Sigmoid colon (tissue), 7 donors: ENCODE measurements at regions of chr12 and their contacts with region 1.

Region 1: GRCh38 chr12:990661-991349 is at the start of gene ERC1:
- DNase-seq: peak; percentile 94
- H3K4me3 ChIP-seq: peak within 1 kb of the TSS; percentile 77 to 97 (median 86)
- H3K27ac ChIP-seq: peak within 1 kb of the TSS; percentile 98 to 99 (median 98)
- H3K4me1 ChIP-seq: peaks cover 0 to 45% (median 34%) of the 10 kb centered on the region in 4 donors
- H3K27me3 ChIP-seq: no peaks in the 10 kb centered on the region
- CTCF ChIP-seq: no peak
- EP300 ChIP-seq: peak in 1 of 4 donors; percentile 8
- POLR2A ChIP-seq: peak; percentile 50 to 59
- total RNA-seq, gene ERC1: 34.6 to 97.8 (median 42.4) TPM

Region 2: GRCh38 chr12:955939-956338 is 34.9 kb before region 1 on chr12:
- intact Hi-C with region 1: no loop called
- DNase-seq: no peak
- H3K4me3 ChIP-seq: no peak overlapping the region
- H3K27ac ChIP-seq: no peak overlapping the region
- H3K4me1 ChIP-seq: peaks cover 0 to 7% (median 0%) of the 10 kb centered on the region in 4 donors
- H3K27me3 ChIP-seq: no peaks in the 10 kb centered on the region
- CTCF ChIP-seq: no peak
- EP300 ChIP-seq: no peak
- POLR2A ChIP-seq: no peak

Region 3: DNA sequence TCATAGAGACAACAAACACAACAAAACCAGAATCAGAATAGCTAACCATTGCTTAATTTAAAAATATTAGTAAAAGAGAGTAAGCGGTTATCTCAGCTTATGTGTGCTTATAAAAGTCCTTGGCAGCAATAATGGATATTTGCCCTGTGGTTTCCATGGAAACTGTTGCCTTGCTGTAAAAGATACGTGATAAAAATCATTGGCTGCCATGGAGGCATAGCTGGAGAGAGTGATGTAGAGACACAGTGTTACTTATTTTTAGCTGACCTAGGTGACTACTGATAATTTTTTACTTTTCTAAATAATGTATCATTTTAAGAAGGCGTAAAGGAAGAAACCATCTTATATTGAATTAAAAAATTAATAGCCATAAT is 93.1 kb after region 1 on chr12:
- intact Hi-C with region 1: loop called (anchors 5 kb)
- DNase-seq: no peak
- H3K4me3 ChIP-seq: peak overlapping the region in 3 of 4 donors; percentile 21 to 34 (median 26)
- H3K27ac ChIP-seq: peak overlapping the region; percentile 51 to 77 (median 72)
- H3K4me1 ChIP-seq: peaks cover 0 to 21% (median 9%) of the 10 kb centered on the region in 4 donors
- H3K27me3 ChIP-seq: no peaks in the 10 kb centered on the region
- CTCF ChIP-seq: no peak
- EP300 ChIP-seq: no peak
- POLR2A ChIP-seq: no peak

Region 4: DNA sequence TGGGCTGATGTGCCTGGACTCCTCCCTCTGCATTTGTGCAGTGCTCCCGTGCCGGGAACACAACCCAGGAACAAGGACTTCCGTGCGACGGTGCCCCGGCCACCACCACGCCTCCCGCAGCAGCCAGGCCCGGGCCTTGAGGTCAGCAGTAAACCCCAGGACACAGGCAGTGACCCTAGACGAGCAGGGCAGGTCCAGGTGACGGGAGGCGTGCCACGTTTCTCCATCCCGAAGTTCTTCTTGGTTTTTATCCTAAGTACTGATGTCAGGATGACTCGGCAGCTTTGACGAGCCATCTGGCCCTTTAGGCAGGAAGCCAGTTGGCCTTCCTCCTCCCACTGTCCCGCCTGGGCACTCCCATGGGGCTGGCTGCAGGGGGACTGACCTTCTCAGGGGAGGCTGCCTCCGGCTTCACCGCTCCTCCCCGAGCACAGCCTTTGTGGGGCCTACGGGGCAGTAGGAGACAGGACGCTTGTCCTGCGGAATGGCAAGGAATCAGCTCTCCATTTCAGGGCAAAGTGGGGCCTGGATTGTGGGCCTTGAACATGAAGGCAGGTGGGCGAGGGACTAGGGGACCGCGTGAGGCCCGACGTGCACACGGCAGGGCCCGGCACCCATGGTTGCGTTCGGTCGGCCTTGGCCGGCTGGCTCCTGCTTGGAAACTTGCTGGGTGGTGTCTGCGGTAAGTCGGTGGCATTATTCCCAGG is 509.4 kb after region 1 on chr12:
- intact Hi-C with region 1: no loop called
- DNase-seq: no peak
- H3K4me3 ChIP-seq: no peak overlapping the region
- H3K27ac ChIP-seq: no peak overlapping the region
- H3K4me1 ChIP-seq: peaks cover 0 to 36% (median 29%) of the 10 kb centered on the region in 4 donors
- H3K27me3 ChIP-seq: no peaks in the 10 kb centered on the region
- CTCF ChIP-seq: no peak
- EP300 ChIP-seq: no peak
- POLR2A ChIP-seq: no peak

Region 5: GRCh38 chr12:1603269-1603993 is 612.6 kb after region 1 on chr12:
- intact Hi-C with region 1: loop called (anchors 5 kb)
- DNase-seq: no peak
- H3K4me3 ChIP-seq: no peak overlapping the region
- H3K27ac ChIP-seq: peak overlapping the region in 2 of 4 donors; percentile 31 to 88
- H3K4me1 ChIP-seq: peaks cover 0 to 32% (median 22%) of the 10 kb centered on the region in 4 donors
- H3K27me3 ChIP-seq: no peaks in the 10 kb centered on the region
- CTCF ChIP-seq: no peak
- EP300 ChIP-seq: no peak
- POLR2A ChIP-seq: no peak